ENCODE measurements at regions of chr17 and their contacts with region 1.

Region 1: GRCh38 chr17:41688699-41689496 is at the start of gene EIF1:
- DNase-seq: peak; percentile 100
- H3K4me3 Mint-ChIP-seq: peak within 1 kb of the TSS; percentile 88
- H3K27ac Mint-ChIP-seq: peak within 1 kb of the TSS; percentile 98
- H3K4me1 Mint-ChIP-seq: peaks cover 39% of the 10 kb centered on the region
- H3K27me3 Mint-ChIP-seq: no peaks in the 10 kb centered on the region
- total RNA-seq, gene EIF1: 933 to 950 TPM

Region 2: DNA sequence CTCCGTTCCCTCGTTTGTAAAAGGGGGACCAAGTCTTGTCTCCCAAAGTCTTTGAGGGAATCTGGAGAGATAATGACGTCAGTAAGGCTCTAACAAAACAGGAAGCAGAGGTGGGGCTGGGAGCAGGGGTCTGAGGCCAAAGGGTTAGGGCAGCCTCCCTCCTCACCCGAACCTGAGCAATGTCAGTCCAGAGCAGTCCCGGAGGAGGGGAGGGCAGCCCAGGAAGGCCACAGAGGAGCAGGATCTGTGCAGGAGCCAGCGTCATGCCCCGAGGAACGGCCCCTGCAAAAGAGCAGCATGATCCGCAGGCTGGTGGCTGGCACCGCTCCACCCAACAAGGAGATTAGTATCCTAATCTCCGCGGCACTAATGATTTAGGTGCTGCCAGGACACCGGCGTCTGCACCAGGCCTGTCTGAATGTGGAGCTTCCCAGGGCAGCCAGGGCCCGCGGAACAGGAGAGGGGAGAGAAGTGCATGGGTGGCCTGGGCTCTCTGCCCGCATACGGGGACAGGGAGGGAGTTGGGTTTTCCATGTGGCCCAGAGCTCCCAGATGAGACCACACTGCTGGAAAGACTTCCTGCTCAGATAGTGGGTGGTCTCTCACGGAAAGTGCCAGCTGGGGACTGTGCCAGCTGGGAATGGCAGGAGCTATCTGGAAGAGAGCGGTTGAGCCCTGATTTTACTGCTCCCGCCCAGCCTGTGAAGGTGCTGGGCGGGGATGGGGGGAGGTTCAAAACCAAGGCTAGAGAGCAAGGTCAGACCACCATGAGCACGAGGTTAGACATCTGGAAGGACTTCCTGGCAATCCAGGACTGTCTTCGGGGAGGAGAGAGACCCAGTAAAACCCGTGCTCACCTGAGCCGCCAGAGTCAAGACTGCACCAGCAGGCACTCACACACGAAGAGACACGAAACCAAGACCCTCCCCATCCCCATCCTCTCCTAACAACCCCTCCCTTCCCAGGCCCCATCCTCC is 53.5 kb before region 1 on chr17:
- CTCF ChIA-PET with region 1: no interaction called
- POLR2A ChIA-PET with region 1: no interaction called
- DNase-seq: no peak
- H3K4me3 Mint-ChIP-seq: no peak overlapping the region
- H3K27ac Mint-ChIP-seq: no peak overlapping the region
- H3K4me1 Mint-ChIP-seq: no peaks in the 10 kb centered on the region
- H3K27me3 Mint-ChIP-seq: no peaks in the 10 kb centered on the region

Region 3: DNA sequence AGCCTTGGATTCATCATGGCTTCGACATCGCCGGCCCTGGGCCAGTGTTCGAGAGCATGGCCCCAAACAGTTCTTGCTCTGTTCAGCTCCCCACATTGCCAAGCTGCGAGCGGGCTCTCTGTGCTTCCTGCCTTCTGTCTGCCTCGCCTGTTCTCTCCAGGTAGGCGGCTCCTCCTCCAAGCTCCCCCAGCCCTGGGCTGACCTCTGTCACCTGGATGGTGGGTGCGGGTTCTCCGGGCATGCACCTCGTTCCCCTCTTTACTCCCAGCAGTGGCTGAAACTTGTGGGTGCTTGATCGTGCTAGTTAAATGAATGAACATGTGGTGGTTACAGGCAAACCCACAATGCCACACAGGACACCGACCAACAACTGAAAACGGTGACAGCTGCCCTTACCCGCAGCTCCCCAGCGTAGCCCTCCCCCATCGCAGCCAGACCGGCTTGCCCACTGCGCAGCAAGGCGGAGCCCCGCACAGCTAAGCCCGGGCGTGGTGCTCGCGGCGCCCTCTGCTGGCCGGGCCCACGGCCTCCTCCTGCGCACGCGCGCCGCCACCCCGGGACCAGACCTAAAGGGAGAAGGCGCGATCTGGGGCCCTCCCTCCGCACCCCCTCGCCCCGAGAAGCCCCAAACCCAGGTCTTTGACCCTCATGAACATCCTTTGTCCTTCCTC is 23.2 kb before region 1 on chr17:
- CTCF ChIA-PET with region 1: interaction called, 395 read pairs
- POLR2A ChIA-PET with region 1: interaction called, 220 read pairs
- DNase-seq: peak; percentile 91
- H3K4me3 Mint-ChIP-seq: peak overlapping the region; percentile 75
- H3K27ac Mint-ChIP-seq: peak overlapping the region; percentile 94
- H3K4me1 Mint-ChIP-seq: peaks cover 47% of the 10 kb centered on the region
- H3K27me3 Mint-ChIP-seq: peaks cover 14% of the 10 kb centered on the region

Region 4: GRCh38 chr17:41710468-41711090 is 21.7 kb after region 1 on chr17:
- CTCF ChIA-PET with region 1: no interaction called
- POLR2A ChIA-PET with region 1: interaction called, 11 read pairs
- DNase-seq: peak; percentile 27
- H3K4me3 Mint-ChIP-seq: no peak overlapping the region
- H3K27ac Mint-ChIP-seq: no peak overlapping the region
- H3K4me1 Mint-ChIP-seq: peaks cover 4% of the 10 kb centered on the region
- H3K27me3 Mint-ChIP-seq: peaks cover 21% of the 10 kb centered on the region

Region 5: DNA sequence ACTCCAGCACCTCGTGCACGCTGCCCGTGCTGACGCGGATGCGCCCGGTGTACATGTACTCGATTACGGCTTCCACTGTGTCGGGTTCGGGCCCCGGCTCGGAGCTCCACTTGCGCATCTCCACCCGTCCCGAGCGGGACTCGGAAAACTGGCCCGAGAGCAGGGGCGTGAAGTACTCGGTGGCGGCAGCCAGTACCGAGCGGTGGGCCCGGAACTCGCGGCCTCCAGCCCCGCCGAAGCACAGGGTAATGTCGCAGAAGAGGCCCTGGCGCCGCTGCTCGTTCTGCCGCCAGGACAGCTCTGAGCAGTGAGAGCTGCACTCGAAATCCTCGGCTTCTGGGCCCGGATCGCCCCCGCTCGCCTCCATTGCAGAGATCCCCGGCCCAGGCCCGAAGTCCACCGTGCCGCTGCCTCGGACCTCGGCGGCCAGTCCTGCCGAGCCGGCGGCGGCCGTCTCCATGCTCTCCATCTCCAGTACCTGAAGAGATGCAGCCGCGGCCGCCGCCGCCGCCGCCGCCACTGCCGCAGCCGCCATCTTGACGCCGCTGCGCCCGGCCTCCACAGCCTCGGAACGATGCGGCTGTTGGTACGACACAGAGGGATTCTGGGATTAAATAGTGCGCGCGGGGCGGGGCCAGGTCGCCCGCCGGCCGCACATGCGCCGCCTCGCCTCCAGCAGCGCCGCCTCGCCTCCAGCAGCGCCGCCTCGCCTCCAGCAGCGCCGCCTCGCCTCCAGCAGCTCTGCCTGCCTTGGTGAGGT is 176.1 kb after region 1 on chr17 and contains the start of gene KLHL11:
- CTCF ChIA-PET with region 1: no interaction called
- POLR2A ChIA-PET with region 1: interaction called, 13 read pairs
- DNase-seq: peak; percentile 91
- H3K4me3 Mint-ChIP-seq: no peak within 1 kb of the TSS
- H3K27ac Mint-ChIP-seq: no peak within 1 kb of the TSS
- H3K4me1 Mint-ChIP-seq: peaks cover 49% of the 10 kb centered on the region
- H3K27me3 Mint-ChIP-seq: no peaks in the 10 kb centered on the region
- total RNA-seq, gene KLHL11: 13.9 to 14.4 TPM

Region 6: GRCh38 chr17:41966463-41967140 is 277.7 kb after region 1 on chr17 and contains the start of gene CNP:
- CTCF ChIA-PET with region 1: no interaction called
- POLR2A ChIA-PET with region 1: interaction called, 10 read pairs
- DNase-seq: peak; percentile 93
- H3K4me3 Mint-ChIP-seq: peak within 1 kb of the TSS; percentile 81
- H3K27ac Mint-ChIP-seq: peak within 1 kb of the TSS; percentile 84
- H3K4me1 Mint-ChIP-seq: peaks cover 50% of the 10 kb centered on the region
- H3K27me3 Mint-ChIP-seq: no peaks in the 10 kb centered on the region
- total RNA-seq, gene CNP: 89.8 to 91.0 TPM